Natural killer cell (primary cell): ENCODE measurements at regions of chr19 and their contacts with region 1.

Region 1: DNA sequence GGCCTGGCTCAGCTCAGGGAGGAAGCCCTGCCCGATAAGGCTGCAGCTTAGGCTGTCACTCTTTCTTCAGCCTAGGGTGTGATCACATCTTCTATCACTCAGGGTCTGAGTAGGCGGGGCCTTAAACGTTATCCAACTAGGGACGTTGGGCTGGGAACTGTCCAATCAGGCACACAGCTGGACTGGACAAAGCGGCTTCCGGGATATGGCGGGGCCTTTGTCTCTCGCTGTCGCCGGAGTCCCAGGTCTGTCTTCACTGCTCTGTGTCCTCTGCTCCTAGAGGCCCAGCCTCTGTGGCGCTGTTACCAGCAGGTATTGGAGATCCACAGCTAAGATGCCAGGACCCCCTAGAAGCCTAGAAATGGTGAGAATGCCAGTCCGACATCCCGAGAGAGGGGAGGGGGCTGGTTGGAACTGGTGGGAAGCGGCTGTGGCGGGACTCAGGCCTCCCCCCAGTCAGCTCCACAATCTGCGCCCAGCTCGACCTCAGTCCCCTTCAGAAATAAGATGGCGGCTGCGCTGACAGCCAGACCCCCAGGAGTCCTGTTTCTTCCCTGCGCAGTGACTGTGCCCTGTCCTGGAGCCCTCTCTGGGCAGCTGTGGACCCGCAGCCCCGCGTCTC is at the start of gene ZNF254:
- DNase-seq: peak; percentile 79 to 86
- ATAC-seq: peak; percentile 98 to 100 (median 99)
- H3K4me3 ChIP-seq: peak within 1 kb of the TSS; percentile 81
- H3K4me3 Mint-ChIP-seq: peak within 1 kb of the TSS; percentile 95
- H3K27ac ChIP-seq: peak within 1 kb of the TSS; percentile 88
- H3K27ac Mint-ChIP-seq: peak within 1 kb of the TSS; percentile 93 to 96
- H3K4me1 ChIP-seq: peaks cover 18% of the 10 kb centered on the region
- H3K4me1 Mint-ChIP-seq: peaks cover 6 to 16% of the 10 kb centered on the region in 2 donors
- H3K27me3 ChIP-seq: no peaks in the 10 kb centered on the region
- H3K27me3 Mint-ChIP-seq: no peaks in the 10 kb centered on the region
- CTCF ChIP-seq: no peak
- total RNA-seq, gene ZNF254: 16.7 to 20.5 (median 19.8) TPM

Region 2: DNA sequence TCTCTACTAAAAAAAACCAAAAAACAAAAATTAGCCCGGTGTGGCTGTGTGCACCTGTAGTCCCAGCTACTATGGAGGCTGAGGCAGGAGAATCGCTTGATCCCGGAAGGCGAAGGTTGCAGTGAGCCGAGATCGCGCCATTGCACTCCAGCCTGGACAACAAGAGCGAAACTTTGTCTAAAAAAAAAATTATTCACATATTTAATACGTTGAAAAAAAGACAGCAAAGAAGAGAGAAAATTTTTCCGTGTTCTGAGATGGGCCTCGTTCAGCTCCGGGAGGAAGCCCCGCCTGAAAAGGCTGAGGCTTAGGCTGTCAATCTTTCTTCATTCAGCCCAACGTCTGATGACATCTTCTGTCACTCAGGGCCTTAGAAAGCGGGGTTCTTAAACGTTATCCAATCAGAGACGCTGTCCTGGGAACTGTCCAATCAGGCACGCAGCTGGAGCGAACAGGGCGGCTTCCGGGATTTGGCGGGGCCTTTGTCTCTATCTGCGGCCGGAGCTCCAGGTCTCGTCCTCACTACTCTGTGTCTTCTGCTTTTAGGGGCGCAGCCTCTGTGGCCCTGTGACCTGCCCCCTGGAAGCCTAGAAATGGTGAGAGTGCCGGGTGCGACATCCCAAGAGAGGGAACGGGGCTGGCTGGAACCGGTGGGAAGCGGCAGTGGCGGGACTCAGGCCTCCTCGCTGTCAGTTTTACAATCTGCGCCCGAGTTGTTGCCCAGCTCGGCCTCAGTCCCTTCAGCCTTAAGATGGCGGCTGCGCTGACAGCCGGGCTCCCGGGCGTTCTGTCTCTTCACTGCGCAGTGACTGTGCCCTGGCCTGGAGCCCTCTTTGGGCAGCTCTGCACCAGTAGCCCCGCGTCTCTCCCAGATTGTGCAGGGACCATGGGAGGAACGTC is 172.4 kb before region 1 on chr19 and contains the start of gene ZNF726:
- intact Hi-C with region 1: loop called (anchors 10 kb)
- DNase-seq: peak; percentile 83 to 93
- ATAC-seq: peak; percentile 96 to 97 (median 96)
- H3K4me3 ChIP-seq: peak within 1 kb of the TSS; percentile 57
- H3K4me3 Mint-ChIP-seq: peak within 1 kb of the TSS; percentile 95
- H3K27ac ChIP-seq: peak within 1 kb of the TSS; percentile 46
- H3K27ac Mint-ChIP-seq: peak within 1 kb of the TSS; percentile 86 to 94
- H3K4me1 ChIP-seq: peaks cover 13% of the 10 kb centered on the region
- H3K4me1 Mint-ChIP-seq: peaks cover 0 to 9% of the 10 kb centered on the region in 2 donors
- H3K27me3 ChIP-seq: no peaks in the 10 kb centered on the region
- H3K27me3 Mint-ChIP-seq: no peaks in the 10 kb centered on the region
- CTCF ChIP-seq: no peak
- total RNA-seq, gene ZNF726: 4.8 to 6.4 (median 5.8) TPM

Region 3: DNA sequence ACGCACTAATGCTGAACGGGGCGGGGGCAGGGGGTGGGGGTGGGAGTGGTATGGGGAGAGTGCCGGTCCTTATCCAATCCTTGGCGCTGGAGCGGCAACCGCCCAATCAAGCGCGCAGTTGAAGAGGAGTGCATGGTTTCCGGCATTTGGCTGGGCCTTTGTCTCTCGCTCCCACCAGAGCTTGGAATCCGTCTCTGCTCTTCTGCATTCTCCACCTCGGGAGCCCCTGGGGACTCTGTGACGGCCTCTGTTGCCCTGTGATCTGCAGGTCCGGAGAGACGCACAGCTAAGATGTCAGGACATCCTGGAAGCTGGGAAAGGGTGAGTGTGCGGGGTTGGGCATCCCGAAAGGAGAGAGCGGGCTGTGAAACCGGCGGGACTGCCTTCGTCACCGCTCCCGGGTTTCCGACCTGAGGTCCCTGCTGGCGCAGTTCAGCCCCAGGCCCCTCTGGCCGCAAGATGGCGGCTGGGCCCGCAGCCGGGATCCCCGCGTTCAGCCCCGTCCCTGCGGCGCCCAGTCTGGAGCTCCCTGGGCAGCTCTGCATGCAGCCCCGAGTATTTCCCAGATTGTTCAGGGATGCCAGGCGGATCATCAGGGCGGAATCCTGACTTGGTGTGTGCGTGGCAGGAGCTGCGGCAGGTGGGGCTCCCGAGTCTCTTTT is 53.7 kb before region 1 on chr19:
- intact Hi-C with region 1: loop called (anchors 1 kb)
- DNase-seq: peak; percentile 78 to 91
- ATAC-seq: peak; percentile 98 to 99 (median 99)
- H3K4me3 ChIP-seq: peak overlapping the region; percentile 93
- H3K4me3 Mint-ChIP-seq: peak overlapping the region; percentile 99
- H3K27ac ChIP-seq: peak overlapping the region; percentile 87
- H3K27ac Mint-ChIP-seq: peak overlapping the region; percentile 91 to 96
- H3K4me1 ChIP-seq: peaks cover 24% of the 10 kb centered on the region
- H3K4me1 Mint-ChIP-seq: peaks cover 32 to 36% of the 10 kb centered on the region in 2 donors
- H3K27me3 ChIP-seq: no peaks in the 10 kb centered on the region
- H3K27me3 Mint-ChIP-seq: no peaks in the 10 kb centered on the region
- CTCF ChIP-seq: no peak

Region 4: DNA sequence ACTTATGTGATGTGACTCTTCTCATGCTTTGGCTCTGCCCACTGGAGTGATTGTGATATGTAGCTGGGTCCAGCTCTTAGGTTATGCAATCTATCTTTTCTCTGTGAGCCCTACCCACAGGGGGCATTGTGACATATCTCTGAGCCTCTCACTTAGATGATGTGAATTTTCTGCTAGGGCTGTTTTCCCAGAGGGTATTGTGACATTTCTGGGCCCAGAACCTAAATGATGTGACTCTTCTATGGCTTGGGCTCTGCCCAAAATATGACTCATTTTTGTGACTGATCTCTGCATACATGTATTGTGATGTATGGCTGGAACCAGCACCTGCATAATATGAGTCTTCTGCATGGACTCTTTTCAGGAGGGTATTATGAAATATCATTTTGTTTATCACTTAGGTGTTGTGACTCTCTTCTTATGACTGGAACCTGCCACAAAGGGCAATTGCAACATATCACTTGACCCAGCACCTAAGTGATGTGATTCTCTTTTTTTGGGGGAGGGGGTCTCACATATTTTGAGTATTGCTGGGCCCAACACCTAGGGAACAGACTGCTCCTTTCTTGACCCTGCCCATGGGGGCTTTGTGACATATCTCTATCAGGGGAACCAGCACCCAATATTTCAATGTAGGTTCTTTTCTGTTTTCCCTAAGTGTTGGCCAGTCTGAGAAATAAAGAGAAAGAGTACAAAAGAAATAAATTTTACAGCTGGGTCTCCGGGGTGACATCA is 12.2 kb before region 1 on chr19:
- intact Hi-C with region 1: no loop called
- DNase-seq: no peak
- ATAC-seq: peak in 1 of 3 donors; percentile 30
- H3K4me3 ChIP-seq: no peak overlapping the region
- H3K4me3 Mint-ChIP-seq: no peak overlapping the region
- H3K27ac ChIP-seq: no peak overlapping the region
- H3K27ac Mint-ChIP-seq: no peak overlapping the region
- H3K4me1 ChIP-seq: no peaks in the 10 kb centered on the region
- H3K4me1 Mint-ChIP-seq: peaks cover 19 to 21% of the 10 kb centered on the region in 2 donors
- H3K27me3 ChIP-seq: no peaks in the 10 kb centered on the region
- H3K27me3 Mint-ChIP-seq: no peaks in the 10 kb centered on the region
- CTCF ChIP-seq: no peak